ENCODE measurements at regions of chr1 and their contacts with region 1.

Region 1: GRCh38 chr1:12511516-12512468 is 106.2 kb downstream of the DHRS3 start:
- DNase-seq: no peak
- H3K4me3 Mint-ChIP-seq: peak overlapping the region; percentile 87
- H3K27ac Mint-ChIP-seq: peak overlapping the region; percentile 100
- H3K4me1 Mint-ChIP-seq: peaks cover 60% of the 10 kb centered on the region
- H3K27me3 Mint-ChIP-seq: no peaks in the 10 kb centered on the region

Region 2: DNA sequence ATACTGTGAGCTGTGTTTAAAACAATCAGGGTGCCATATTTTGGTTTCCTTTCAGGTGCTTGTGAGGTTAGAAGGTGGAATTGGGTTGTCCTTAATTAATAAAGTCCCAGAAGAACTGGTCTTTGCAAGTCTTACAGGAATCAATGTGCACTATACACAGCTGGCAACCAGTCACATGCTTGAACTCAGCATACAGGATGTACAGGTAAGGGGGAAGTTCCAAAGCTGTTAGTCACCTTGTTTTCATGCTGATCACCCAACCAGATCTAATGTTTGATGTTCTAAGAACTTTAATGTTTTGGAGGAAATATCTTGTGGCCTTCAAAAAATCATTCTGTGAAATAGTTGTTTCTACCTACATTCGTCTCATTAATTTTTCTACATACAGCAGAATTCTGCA is 125.7 kb before region 1 on chr1:
- intact Hi-C with region 1: loop called (anchors 5 kb)
- DNase-seq: no peak
- H3K4me3 Mint-ChIP-seq: peak overlapping the region; percentile 38
- H3K27ac Mint-ChIP-seq: peak overlapping the region; percentile 70
- H3K4me1 Mint-ChIP-seq: peaks cover 58% of the 10 kb centered on the region
- H3K27me3 Mint-ChIP-seq: no peaks in the 10 kb centered on the region

Region 3: GRCh38 chr1:12472798-12473551 is 38.8 kb before region 1 on chr1:
- intact Hi-C with region 1: loop called (anchors 1 kb)
- DNase-seq: peak; percentile 64
- H3K4me3 Mint-ChIP-seq: peak overlapping the region; percentile 69
- H3K27ac Mint-ChIP-seq: peak overlapping the region; percentile 93
- H3K4me1 Mint-ChIP-seq: peaks cover 82% of the 10 kb centered on the region
- H3K27me3 Mint-ChIP-seq: no peaks in the 10 kb centered on the region

Region 4: DNA sequence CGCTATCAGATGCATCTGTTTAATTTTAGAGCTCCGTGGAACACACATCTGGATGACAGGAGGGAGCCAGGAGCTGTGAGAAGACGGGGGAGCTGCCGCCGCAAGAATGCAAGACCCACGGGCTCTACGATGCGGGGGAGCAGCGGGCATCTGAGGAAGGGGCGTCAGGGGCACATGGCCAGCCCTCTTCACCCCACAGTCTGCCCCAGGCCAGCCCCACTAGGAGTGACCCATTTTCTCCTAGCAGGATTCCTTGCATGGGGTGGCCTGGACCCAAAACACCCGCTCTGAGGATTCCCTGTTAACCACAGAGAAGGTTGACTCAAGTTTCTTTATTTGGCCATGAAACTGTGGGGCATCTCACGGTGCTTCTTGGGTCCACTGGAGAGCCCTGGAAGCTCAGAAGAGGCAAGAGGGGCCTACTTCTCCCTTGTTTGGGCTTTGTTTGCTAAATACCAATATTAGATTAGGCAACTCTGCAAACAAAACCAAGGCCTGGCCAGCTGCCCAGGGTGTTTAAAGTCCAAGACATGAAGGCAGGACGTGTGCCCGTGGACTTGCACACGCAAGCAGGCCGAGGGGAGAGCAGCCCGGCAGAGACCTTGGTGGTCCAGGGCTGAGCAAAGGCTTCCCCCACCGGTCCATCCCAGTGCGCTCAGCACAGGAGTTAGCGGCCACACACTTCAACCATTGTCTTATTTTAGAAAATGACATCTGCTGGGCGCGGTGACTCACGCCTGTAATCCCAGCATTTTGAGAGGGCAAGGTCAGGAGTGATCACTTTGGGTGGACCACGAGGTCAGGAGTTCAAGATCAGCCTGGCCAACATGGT is 16.4 kb after region 1 on chr1:
- intact Hi-C with region 1: no loop called
- DNase-seq: no peak
- H3K4me3 Mint-ChIP-seq: no peak overlapping the region
- H3K27ac Mint-ChIP-seq: no peak overlapping the region
- H3K4me1 Mint-ChIP-seq: peaks cover 14% of the 10 kb centered on the region
- H3K27me3 Mint-ChIP-seq: no peaks in the 10 kb centered on the region

Region 5: GRCh38 chr1:12604114-12604874 is 92.5 kb after region 1 on chr1:
- intact Hi-C with region 1: loop called (anchors 5 kb)
- DNase-seq: peak; percentile 49
- H3K4me3 Mint-ChIP-seq: peak overlapping the region; percentile 47
- H3K27ac Mint-ChIP-seq: peak overlapping the region; percentile 64
- H3K4me1 Mint-ChIP-seq: peaks cover 41% of the 10 kb centered on the region
- H3K27me3 Mint-ChIP-seq: peaks cover 4% of the 10 kb centered on the region

Region 6: DNA sequence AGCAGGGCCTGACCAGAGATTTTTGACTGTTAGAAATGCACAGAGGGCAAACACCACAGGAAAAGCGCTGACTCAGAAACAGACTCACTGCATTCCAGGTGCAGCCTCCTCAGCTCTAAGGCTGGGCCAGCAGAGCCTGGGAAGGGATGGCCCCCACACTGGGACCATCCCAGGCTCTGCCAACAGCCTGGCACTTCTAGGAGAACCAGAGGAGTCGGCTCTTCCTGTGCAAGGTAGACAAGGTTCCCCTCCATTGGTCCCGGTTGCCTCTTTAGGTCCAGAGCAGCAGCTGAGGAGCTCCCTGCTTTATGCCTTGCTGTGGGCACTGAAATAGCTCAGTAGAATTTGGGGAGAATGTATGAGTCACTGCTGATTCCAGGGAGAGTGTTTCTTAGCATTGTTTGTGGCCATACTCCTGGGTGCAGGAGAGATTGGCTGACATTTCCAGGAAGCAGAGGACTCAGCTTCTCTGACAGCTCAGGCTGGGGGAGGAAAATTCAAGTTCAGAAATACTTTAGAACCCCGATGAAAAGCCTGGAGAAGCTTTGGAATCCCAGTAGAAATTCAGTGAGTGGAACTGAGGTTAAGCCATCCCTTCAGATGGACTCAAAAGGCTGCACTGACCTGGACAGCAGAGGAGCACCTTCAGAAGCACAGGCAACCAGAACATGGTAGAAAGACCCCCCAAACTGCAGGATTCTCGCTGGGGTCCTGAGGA is 299.1 kb after region 1 on chr1:
- intact Hi-C with region 1: no loop called
- DNase-seq: no peak
- H3K4me3 Mint-ChIP-seq: no peak overlapping the region
- H3K27ac Mint-ChIP-seq: no peak overlapping the region
- H3K4me1 Mint-ChIP-seq: no peaks in the 10 kb centered on the region
- H3K27me3 Mint-ChIP-seq: peaks cover 4% of the 10 kb centered on the region

Measured in activated T-helper 1 cell treated with anti-CD3 and anti-CD28 coated beads, Interleukin-12 subunit alpha, Interleukin-12 subunit beta, Interleukin-2, Interleukin-4 antibody, amounts not matched to agents 30 ng/mL and 10 ng/mL and 1 ng/mL, durations not matched to agents 14 hours and 24 hours and 36 hours (primary cell).